Right ventricle myocardium superior (tissue), 1 donor: ENCODE measurements at regions of chr9 and their contacts with region 1.

Region 1: GRCh38 chr9:126490871-126491567 is 122.7 kb upstream of the LMX1B start:
- DNase-seq: no peak
- ATAC-seq: peak; percentile 68

Region 2: DNA sequence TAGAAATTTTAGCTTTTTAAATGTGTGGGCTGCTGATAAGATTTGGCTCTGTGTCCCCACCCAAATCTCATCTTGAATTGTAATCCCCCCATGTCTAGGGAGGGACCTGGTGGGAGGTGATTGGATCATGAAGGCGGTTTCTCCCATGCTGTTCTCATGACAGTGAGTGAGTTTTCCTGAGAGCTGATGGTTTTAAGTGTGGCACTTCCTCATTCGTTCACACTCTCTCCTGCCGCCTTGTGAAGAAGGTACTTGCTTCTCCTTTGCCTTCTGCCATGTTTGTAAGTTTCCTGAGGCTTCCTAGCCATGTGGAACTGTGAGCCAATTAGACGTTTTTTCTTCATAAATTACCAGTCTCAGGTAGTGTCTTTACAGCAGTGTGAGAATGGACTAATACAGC is 292.2 kb before region 1 on chr9:
- intact Hi-C with region 1: no loop called
- DNase-seq: no peak
- ATAC-seq: no peak

Region 3: DNA sequence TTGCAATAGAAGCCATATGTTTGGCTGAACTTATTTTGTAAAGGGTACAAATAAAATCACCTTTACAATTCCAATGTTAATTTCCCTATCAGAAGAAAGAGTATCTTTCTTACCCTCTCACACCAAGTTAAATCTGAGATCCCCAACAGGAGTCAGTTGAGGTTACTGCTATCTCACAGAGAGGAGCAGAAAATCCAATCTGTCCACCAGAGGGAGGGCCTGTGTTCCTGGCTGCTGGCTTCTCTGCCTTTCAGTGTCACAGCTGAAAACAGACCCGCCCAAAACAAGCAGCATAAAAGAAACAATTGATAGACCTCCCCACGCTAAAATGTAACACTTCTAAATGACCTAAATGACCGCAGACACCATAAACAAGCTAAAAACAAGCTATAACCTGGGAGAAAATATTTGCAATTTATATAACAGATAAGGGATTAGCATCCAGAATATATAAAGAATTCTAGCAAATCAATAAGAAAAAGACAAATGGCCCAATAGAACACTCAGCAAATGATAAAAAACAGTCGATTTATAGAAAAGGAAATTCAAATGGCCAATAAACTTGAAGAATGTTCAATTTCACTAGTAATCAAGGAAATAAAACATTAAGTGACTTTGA is 188.9 kb before region 1 on chr9:
- intact Hi-C with region 1: loop called (anchors 5 kb)
- DNase-seq: no peak
- ATAC-seq: peak; percentile 89

Region 4: DNA sequence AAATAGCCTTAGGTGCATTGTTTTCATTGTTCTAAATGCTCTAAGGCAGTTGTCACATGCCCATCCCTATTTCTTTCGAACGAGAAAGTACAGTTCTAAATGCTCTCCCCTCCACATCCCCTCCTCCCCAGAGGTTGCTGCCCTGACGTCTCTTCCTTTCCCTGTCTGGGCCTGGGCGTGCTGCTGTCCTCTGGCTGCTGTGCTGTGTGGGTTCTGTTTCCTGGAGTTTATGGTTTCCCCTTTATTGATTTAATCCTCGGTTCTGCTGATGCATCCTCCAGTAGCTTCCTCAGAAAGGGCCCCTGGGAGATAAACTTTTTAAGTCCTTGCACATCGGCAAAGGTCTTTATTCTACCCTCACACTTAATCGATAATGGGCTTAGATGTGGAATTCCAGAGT is 115.6 kb before region 1 on chr9:
- intact Hi-C with region 1: no loop called
- DNase-seq: no peak
- ATAC-seq: peak; percentile 71

Region 5: GRCh38 chr9:126419475-126419874 is 71.5 kb before region 1 on chr9:
- intact Hi-C with region 1: loop called (anchors 5 kb)
- DNase-seq: no peak
- ATAC-seq: peak; percentile 86

Region 6: DNA sequence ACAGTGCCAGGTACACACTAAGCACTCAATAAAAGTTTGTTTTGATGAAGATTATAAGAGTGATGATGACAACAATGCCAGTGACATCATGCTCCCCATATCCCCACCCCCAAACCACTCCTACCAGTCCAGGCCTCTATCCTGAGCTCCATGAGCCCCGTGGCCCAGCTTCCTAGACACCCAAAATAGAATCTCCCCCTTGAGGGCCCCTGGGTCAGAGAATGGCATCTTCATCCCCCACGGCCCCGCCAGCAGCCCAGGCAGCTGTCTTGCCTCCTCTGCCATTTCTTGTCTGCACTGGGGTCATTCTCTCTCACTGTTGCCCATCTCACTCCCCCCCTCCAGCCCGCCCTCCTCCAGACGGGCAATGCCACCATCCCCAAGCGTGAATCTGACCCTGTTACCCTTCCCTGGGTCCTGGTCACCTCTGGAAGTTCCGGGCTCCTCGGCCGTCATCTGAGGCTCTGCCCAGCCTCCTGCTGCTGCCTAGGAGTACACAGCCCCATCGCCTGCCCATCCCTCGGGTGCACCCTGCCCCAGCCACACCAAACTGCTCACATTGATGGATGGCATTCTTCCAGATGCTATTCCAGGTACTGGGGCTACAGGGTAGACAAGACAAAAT is 45.9 kb after region 1 on chr9:
- intact Hi-C with region 1: no loop called
- DNase-seq: peak; percentile 10
- ATAC-seq: no peak

Region 7: DNA sequence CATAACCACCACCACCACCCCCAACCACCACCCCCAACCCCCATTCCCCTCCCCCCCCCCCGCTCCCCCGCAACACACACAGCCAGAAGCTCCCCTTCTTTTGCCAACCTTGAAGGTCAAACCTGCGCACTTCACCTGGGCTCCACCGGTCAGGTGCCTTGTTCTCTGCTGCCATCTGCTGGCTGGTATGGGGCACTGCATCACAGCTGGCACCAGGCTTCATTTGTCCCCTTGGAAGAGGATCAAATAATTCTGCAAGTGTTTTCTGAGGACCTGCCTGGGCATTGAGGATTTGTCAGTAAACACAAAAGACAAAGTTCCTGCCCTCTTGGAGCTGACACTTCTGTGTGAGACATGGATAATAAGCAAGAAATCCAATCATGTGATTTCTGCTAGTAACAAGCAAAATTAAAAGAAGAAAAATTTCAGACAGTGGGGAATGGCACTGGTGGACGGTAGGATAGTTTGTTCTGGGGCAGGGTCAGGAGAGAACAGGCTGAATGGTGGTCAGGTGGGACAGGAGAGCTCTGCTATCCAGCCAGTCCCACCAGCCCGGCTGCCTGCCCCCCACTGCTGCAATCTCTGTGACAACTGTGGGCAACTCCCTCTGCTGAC is 67.1 kb after region 1 on chr9:
- intact Hi-C with region 1: no loop called
- DNase-seq: peak; percentile 70
- ATAC-seq: peak; percentile 86